Mammary epithelial cell (primary cell): ENCODE measurements at regions of chr2 and their contacts with region 1.

Region 1: DNA sequence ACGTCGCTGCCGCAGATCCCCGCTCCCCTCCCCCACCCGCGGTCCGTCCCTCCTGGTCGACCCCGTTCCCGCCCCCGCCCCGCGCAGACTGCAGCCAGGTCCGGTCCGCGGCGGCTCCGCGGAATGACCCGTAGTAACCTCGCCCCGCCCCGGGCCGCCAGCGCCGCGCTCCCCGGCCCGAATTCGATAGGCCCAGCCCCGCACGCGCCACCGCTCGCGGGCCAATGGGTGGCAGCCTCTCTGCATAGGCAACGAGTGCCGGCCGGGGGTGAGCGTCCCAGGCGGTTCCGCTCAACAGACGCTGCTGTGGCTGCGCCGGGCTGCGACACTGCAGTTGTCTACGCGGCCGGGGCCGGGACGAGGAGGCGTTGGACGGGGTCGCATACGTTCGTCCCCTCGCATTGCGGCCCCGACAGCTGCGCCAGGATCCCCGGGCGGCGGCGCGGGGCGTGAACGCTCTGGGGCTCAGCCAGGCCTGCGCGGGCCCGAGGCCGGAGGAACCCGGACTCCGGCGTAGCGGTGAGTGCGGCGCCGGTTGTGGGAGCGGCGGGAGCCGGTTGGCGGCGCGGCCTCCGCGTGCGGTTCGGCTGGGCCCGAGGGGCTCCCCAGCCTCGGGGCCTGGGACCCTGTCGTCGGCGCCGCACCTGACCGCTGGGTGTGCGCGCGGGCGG is at the start of gene ACSL3:
- DNase-seq: peak; percentile 95
- H3K4me3 ChIP-seq: peak within 1 kb of the TSS; percentile 86 to 97 (median 90)
- H3K27ac ChIP-seq: peak within 1 kb of the TSS; percentile 91
- H3K4me1 ChIP-seq: peaks cover 37% of the 10 kb centered on the region
- H3K27me3 ChIP-seq: no peaks in the 10 kb centered on the region
- CTCF ChIP-seq: no peak
- total RNA-seq, gene ACSL3: 199 to 213 TPM

Region 2: GRCh38 chr2:222690564-222691200 is 170.2 kb before region 1 on chr2:
- CTCF ChIA-PET with region 1: no interaction called
- dilution Hi-C with region 1: no loop called
- in situ Hi-C with region 1: no loop called
- intact Hi-C with region 1: loop called (anchors 5 kb)
- DNase-seq: peak; percentile 45
- H3K4me3 ChIP-seq: no peak overlapping the region
- H3K27ac ChIP-seq: no peak overlapping the region
- H3K4me1 ChIP-seq: no peaks in the 10 kb centered on the region
- H3K27me3 ChIP-seq: no peaks in the 10 kb centered on the region
- CTCF ChIP-seq: peak; percentile 100

Region 3: DNA sequence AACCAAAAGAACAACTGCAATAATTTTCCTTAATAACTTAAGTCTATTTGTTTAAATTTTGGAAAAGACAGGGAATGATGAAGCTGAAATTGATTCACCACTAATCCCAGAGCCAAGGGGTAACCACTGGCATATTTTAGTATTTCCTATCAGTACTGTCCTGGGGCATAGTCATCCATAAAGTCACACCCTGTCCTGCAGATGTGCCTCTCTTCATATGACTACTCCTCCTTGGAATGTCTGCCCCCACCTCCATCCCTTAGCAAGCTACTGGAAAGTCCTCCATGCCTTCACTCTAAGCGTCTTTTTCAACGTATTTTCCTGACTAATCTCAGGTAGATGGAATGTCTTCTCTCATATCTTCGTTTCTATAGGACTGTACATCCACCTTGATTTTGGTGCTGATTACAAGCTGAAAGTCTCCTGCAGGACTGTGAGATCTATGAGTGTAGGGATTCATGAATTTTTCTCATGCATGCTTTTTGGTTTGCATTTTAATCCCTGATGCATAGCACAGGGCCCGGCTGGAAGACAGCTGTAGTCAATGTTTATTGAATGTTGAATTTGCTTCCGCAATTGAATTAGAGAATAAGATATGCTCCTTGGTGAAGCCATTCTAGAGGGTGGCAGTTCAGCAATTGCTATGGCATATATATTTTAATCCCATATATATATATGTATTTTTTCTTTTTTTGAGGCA is 103.8 kb before region 1 on chr2:
- CTCF ChIA-PET with region 1: no interaction called
- dilution Hi-C with region 1: loop called (anchors 5 kb)
- in situ Hi-C with region 1: no loop called
- intact Hi-C with region 1: no loop called
- DNase-seq: peak; percentile 87
- H3K4me3 ChIP-seq: no peak overlapping the region
- H3K27ac ChIP-seq: peak overlapping the region; percentile 94
- H3K4me1 ChIP-seq: peaks cover 44% of the 10 kb centered on the region
- H3K27me3 ChIP-seq: no peaks in the 10 kb centered on the region
- CTCF ChIP-seq: no peak

Region 4: DNA sequence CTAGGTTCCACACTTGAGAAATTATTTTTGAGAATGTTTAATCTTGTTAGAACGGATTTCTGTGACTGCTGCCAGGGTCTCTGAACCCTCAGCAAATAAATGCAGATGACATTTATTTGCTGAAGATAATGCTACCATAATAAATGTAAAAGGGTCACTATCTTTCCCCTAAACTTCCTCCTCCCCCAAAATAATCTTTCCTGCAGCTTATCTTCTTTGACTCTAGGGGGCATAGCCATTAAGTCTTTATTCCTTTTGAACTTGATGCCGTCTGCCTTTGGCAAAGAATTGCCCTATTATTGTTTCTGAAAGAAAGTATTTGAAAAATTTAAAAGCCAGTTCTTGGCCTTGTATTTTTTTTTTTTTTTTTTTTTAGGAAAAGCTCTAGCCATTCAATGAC is 63.6 kb before region 1 on chr2:
- CTCF ChIA-PET with region 1: interaction called, 21 read pairs
- dilution Hi-C with region 1: no loop called
- in situ Hi-C with region 1: loop called in 1 of 2 experiments (anchors 5 kb)
- intact Hi-C with region 1: loop called (anchors 1 kb)
- DNase-seq: no peak
- H3K4me3 ChIP-seq: no peak overlapping the region
- H3K27ac ChIP-seq: no peak overlapping the region
- H3K4me1 ChIP-seq: no peaks in the 10 kb centered on the region
- H3K27me3 ChIP-seq: no peaks in the 10 kb centered on the region
- CTCF ChIP-seq: peak; percentile 66 to 69

Region 5: DNA sequence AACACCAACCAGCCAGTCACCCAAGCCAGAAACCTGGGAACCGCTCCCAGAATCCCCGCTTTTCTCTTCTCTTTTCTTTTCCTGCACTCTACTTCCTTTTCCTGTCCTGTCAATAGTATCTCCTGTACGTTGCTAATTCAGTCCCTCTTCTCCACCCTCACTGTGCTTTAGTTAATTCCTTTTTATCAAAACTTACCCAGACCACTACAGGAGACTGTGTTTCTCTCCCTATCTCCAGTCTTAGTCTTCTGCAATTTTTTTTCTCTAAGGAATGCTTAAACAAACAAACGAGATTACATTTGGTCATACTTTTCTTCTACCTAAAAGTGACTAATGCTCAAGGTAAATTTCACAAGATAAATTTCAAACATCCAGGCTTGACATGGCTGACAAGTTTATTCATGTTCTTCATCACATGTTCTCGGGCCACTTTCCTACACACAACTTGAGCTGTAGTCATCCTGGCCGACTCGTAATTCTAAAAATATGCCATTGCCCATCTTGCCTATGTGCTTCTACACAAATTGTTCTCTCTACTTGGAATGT is 23.3 kb before region 1 on chr2:
- CTCF ChIA-PET with region 1: no interaction called
- dilution Hi-C with region 1: no loop called
- in situ Hi-C with region 1: no loop called
- intact Hi-C with region 1: loop called (anchors 1 kb)
- DNase-seq: peak; percentile 98
- H3K4me3 ChIP-seq: peak overlapping the region in 2 of 3 experiments; percentile 13 to 18
- H3K27ac ChIP-seq: peak overlapping the region; percentile 93
- H3K4me1 ChIP-seq: peaks cover 42% of the 10 kb centered on the region
- H3K27me3 ChIP-seq: no peaks in the 10 kb centered on the region
- CTCF ChIP-seq: no peak

Region 6: DNA sequence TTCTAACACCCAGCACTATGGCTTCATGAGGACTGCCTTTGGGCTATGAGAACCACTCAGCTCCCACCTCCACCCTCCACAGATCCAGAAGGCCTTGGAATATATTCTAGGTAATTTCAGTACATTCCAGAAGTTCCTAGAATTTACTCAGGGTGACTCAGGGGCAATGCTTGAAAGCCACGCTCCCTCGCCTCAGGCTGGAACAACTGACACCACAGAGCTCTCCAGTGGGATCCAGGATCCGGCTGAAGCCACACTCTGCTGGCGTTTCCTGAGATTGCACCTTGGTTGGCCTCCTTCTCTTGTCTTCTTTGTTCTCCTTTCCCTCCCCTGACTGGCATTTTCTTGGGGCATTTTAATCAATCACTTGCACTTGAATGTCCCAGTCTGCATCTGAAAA is 98.5 kb after region 1 on chr2:
- CTCF ChIA-PET with region 1: no interaction called
- dilution Hi-C with region 1: no loop called
- in situ Hi-C with region 1: no loop called
- intact Hi-C with region 1: loop called (anchors 1 kb)
- DNase-seq: peak; percentile 83
- H3K4me3 ChIP-seq: no peak overlapping the region
- H3K27ac ChIP-seq: peak overlapping the region; percentile 15
- H3K4me1 ChIP-seq: peaks cover 22% of the 10 kb centered on the region
- H3K27me3 ChIP-seq: no peaks in the 10 kb centered on the region
- CTCF ChIP-seq: peak; percentile 58 to 65